Motor neuron (in vitro differentiated cells): ENCODE measurements at regions of chr11 and their contacts with region 1.

Region 1: GRCh38 chr11:66344550-66345315 is at the start of gene BRMS1:
- ATAC-seq: peak; percentile 57 to 66 (median 64)
- H3K4me3 ChIP-seq: peak within 1 kb of the TSS; percentile 64 to 85 (median 77)
- H3K27ac ChIP-seq: peak within 1 kb of the TSS; percentile 75 to 81
- H3K4me1 ChIP-seq: peaks cover 14 to 15% of the 10 kb centered on the region in 2 donors
- total RNA-seq, gene BRMS1: 17.5 to 55.5 (median 34.7) TPM

Region 2: DNA sequence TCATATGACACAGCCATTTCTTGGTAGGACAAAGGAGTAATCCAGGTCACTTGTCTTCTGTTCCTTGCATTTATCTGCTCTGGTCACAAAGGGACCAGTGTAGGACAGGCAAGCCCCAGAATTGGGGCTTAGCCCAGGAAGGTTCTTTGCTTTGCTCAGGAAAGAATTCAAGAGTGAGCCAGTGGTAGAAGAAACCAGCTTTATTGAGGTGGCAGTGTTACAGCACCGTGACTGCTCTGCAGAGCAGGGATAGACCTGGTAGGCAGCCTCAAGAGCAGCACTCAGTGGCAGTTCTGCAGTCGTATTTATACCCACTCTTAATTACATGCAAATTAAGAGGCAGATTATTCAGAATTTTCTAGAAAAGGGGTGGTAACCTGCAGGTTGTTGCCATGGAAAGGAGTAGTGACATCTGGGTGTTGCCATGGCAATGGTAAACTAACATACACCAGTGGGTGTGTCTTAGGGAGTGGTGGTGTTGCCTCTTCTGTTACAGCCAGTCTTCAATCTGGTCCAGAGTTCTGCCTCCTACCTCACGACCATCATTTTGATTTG is 161.2 kb before region 1 on chr11:
- in situ Hi-C with region 1: no loop called
- ATAC-seq: peak; percentile 64 to 97 (median 77)
- H3K4me3 ChIP-seq: no peak overlapping the region
- H3K27ac ChIP-seq: no peak overlapping the region
- H3K4me1 ChIP-seq: peaks cover 0 to 3% of the 10 kb centered on the region in 2 donors

Region 3: GRCh38 chr11:66222358-66223149 is 122.2 kb before region 1 on chr11:
- in situ Hi-C with region 1: loop called in 1 of 9 experiments (anchors 25 kb)
- ATAC-seq: peak; percentile 90 to 98 (median 92)
- H3K4me3 ChIP-seq: no peak overlapping the region
- H3K27ac ChIP-seq: no peak overlapping the region
- H3K4me1 ChIP-seq: peaks cover 3 to 6% of the 10 kb centered on the region in 2 donors